BJ (cell line): ENCODE measurements at regions of chr4 and their contacts with region 1.

Region 1: DNA sequence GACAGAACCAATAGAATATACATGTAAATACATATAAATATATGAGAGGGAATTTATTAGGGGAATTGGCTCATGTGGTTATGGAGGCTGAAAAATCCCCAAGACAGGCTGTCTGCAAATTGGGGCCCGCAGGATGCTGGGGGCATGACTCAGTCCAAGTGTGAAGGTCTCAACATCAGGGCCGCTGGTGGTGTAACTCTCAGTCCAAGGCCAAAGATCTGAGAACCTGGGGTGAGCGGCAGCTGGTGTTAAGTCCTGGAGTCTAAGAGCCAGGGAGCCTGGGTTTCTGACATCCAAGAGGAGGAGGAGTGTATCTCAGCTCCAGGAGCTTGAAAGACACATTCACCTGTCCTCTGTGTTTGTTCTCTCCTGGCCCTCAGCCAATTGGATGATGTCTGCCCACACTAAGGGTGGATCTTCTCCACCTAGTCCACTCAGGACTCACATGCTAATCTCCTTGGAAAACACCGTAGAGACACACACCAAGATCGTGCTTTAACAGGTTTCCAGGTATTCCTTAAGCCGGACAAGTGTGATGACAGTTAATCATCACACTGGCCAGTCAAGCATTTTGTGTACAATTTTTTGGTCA is 28.9 kb downstream of the TIGD2 start:
- DNase-seq: no peak
- H3K4me3 ChIP-seq: no peak overlapping the region
- H3K27me3 ChIP-seq: no peaks in the 10 kb centered on the region
- CTCF ChIP-seq: no peak

Region 2: DNA sequence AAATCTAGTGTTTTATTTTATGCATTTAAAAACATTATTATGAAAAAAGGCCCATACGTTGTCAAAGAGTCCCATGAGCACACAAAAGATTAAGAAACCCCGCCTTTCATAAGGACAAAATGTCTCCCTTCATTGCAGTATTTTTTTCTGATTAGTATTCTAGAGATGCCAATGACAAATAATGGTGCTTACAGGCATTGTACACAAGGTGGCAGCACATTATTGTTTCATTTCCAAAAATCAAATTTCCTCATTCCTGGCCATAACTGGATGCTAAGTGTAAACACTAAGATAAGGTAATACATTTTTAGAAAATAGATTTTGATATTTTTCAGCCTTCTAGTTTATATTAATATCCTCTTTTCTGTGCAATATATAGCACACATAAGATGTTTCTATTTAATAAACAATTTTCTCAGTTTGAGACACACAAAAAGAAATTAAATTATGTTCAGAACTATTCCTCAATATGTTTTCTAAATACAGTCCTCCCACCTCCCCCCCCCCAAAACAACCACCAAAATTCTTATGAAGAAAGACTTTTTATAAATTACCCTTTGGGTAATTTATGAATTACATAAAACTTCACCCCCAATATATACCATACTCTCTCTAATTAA is 18.7 kb after region 1 on chr4:
- CTCF ChIA-PET with region 1: interaction called, 10 read pairs
- POLR2A ChIA-PET with region 1: no interaction called
- DNase-seq: peak; percentile 7
- H3K4me3 ChIP-seq: no peak overlapping the region
- H3K27me3 ChIP-seq: no peaks in the 10 kb centered on the region
- CTCF ChIP-seq: peak; percentile 70

Region 3: DNA sequence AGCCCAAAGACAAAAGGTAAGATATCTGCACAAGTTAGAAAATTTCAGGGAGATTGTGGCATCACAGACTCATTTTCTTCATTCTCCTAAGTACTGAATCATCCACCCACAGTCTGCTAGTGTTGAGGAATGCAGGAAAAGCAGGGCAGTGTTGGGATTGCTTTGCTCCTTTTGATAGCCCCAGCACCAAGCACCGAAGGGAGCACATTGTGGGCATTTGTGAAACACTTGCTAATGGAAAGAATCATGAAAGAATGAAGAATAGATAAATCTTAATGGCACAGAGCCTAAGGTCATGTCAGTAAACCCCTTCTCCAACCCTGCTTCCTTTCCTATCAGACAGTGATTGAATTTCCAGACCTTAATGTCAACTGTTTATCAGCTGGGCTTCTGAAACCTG is 270.4 kb after region 1 on chr4:
- CTCF ChIA-PET with region 1: no interaction called
- POLR2A ChIA-PET with region 1: no interaction called
- DNase-seq: peak; percentile 28
- H3K4me3 ChIP-seq: no peak overlapping the region
- H3K27me3 ChIP-seq: no peaks in the 10 kb centered on the region
- CTCF ChIP-seq: no peak